Activated B cell treated with CpG ODN at 0.5 μM for 24 hours (primary cell): ENCODE measurements at regions of chr11 and their contacts with region 1.

Region 1: DNA sequence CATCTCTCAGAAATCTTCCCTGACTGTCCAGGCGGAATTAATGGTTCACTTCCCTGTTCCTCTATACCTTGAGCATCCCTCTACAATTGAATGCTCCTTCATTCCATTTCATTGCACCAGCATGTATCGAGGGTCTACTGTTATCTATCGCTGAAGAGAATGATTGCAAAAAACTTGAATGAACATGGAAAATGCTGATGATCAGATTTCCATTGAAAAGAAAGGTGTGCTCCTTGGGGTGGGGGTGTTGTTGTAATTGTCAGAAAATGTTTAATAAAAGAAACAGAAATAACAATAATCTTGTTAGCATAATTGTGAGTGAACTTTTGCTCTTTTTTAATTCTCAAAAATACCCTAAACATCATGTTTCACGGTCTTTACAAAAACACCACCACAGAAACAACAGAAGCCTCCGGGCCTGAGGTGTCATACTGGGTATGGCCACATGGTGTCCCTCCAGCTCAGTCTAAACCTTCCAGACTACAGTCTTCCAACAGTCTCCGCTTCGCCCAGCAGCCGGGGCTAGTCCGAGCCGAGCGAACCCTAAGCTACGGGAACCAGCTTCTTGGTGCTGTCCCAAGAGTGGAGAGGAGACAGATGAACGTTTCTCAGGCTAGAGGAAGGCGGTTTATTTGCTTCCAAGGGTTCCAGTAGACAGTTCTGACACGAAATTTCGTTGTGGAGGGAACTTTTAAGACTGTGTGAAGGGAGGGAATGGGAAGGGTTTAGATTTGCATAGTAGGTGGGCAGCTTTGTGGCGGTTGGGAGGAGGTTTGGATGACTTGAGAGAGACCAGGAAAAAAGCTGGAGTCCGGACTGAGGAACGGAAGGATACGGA is 75.8 kb upstream of the ZBED5 start:
- DNase-seq: peak; percentile 74
- ATAC-seq: peak; percentile 96
- H3K4me3 Mint-ChIP-seq: peak overlapping the region; percentile 82
- H3K27ac Mint-ChIP-seq: peak overlapping the region; percentile 18
- H3K4me1 Mint-ChIP-seq: peaks cover 22% of the 10 kb centered on the region
- H3K27me3 Mint-ChIP-seq: peaks cover 28% of the 10 kb centered on the region
- CTCF ChIP-seq: peak; percentile 72

Region 2: GRCh38 chr11:10564696-10565318 is 368.9 kb before region 1 on chr11:
- CTCF ChIA-PET with region 1: no interaction called
- POLR2A ChIA-PET with region 1: no interaction called
- intact Hi-C with region 1: no loop called
- DNase-seq: no peak
- ATAC-seq: peak; percentile 31
- H3K4me3 Mint-ChIP-seq: no peak overlapping the region
- H3K27ac Mint-ChIP-seq: peak overlapping the region; percentile 38
- H3K4me1 Mint-ChIP-seq: peaks cover 44% of the 10 kb centered on the region
- H3K27me3 Mint-ChIP-seq: no peaks in the 10 kb centered on the region
- CTCF ChIP-seq: no peak

Region 3: GRCh38 chr11:10575346-10576034 is 358.2 kb before region 1 on chr11:
- CTCF ChIA-PET with region 1: no interaction called
- POLR2A ChIA-PET with region 1: no interaction called
- intact Hi-C with region 1: no loop called
- DNase-seq: no peak
- ATAC-seq: no peak
- H3K4me3 Mint-ChIP-seq: no peak overlapping the region
- H3K27ac Mint-ChIP-seq: no peak overlapping the region
- H3K4me1 Mint-ChIP-seq: peaks cover 74% of the 10 kb centered on the region
- H3K27me3 Mint-ChIP-seq: no peaks in the 10 kb centered on the region
- CTCF ChIP-seq: no peak

Region 4: DNA sequence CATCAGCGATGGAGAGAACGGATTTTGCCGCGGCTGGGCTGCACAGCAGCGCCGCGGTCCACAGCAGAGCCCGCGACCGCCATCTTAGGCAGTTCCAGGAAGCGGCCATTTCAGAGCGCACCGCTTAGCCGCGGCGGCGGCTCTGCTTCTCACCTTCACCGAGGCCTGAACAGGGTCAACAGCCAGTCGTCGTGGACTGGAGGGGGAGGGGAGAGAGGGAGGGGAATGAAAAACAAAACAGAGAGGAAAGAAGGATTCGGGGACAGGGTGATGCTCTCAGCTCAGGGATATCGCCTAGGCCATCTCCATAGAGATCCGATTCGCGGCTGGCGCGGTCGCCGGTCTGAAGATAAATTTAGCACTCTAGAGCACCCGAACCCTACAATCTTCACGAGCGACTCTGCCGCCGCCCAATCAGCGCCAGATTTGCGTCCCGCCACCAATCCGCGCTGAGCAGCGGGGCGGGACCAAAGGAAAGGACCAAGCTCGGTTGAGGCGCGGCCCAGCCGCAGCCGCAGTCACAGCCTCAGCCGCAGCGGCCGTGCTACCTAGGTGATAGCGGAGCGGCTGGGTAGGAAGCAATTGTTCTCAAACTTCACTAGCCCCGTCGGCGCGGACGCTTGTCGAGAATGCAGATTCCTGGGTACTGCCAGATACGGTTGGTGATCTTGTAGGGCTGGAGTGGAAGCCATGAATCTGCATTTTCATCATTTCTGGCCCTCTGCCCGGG is 75.8 kb before region 1 on chr11 and contains the start of gene ZBED5:
- CTCF ChIA-PET with region 1: no interaction called
- POLR2A ChIA-PET with region 1: interaction called, 10 read pairs
- intact Hi-C with region 1: loop called (anchors 2 kb)
- DNase-seq: peak; percentile 93
- ATAC-seq: peak; percentile 89
- H3K4me3 Mint-ChIP-seq: peak within 1 kb of the TSS; percentile 100
- H3K27ac Mint-ChIP-seq: peak within 1 kb of the TSS; percentile 100
- H3K4me1 Mint-ChIP-seq: peaks cover 48% of the 10 kb centered on the region
- H3K27me3 Mint-ChIP-seq: no peaks in the 10 kb centered on the region
- CTCF ChIP-seq: no peak
- total RNA-seq, gene ZBED5: 111 and 116 TPM in 2 replicates

Region 5: DNA sequence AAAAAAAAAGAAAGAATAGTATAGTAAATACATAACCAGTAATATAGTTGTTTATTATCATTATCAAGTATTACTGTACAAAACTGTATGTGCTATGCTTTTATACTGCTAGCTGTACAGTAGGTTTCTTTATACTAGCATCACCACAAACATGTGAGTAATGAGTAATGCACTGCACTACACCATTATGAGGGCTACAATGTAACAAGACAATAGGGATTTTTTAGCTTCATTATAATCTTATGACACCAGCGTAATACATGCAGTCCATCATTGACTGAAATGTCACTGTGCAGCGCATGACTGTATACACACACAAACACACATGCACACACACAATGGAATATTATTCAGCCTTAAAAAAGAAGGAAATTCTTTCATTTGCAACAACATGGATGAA is 35.7 kb after region 1 on chr11:
- CTCF ChIA-PET with region 1: no interaction called
- POLR2A ChIA-PET with region 1: no interaction called
- intact Hi-C with region 1: no loop called
- DNase-seq: no peak
- ATAC-seq: no peak
- H3K4me3 Mint-ChIP-seq: no peak overlapping the region
- H3K27ac Mint-ChIP-seq: no peak overlapping the region
- H3K4me1 Mint-ChIP-seq: peaks cover 8% of the 10 kb centered on the region
- H3K27me3 Mint-ChIP-seq: peaks cover 4% of the 10 kb centered on the region
- CTCF ChIP-seq: no peak

Region 6: GRCh38 chr11:10979529-10979928 is 45.9 kb after region 1 on chr11:
- CTCF ChIA-PET with region 1: interaction called, 11 read pairs
- POLR2A ChIA-PET with region 1: no interaction called
- intact Hi-C with region 1: no loop called
- DNase-seq: no peak
- ATAC-seq: peak; percentile 71
- H3K4me3 Mint-ChIP-seq: peak overlapping the region; percentile 55
- H3K27ac Mint-ChIP-seq: peak overlapping the region; percentile 68
- H3K4me1 Mint-ChIP-seq: peaks cover 68% of the 10 kb centered on the region
- H3K27me3 Mint-ChIP-seq: no peaks in the 10 kb centered on the region
- CTCF ChIP-seq: no peak

Region 7: GRCh38 chr11:11016068-11016467 is 82.4 kb after region 1 on chr11:
- CTCF ChIA-PET with region 1: interaction called, 97 read pairs
- POLR2A ChIA-PET with region 1: interaction called, 3 read pairs
- intact Hi-C with region 1: no loop called
- DNase-seq: no peak
- ATAC-seq: no peak
- H3K4me3 Mint-ChIP-seq: no peak overlapping the region
- H3K27ac Mint-ChIP-seq: no peak overlapping the region
- H3K4me1 Mint-ChIP-seq: peaks cover 16% of the 10 kb centered on the region
- H3K27me3 Mint-ChIP-seq: no peaks in the 10 kb centered on the region
- CTCF ChIP-seq: no peak

Region 8: DNA sequence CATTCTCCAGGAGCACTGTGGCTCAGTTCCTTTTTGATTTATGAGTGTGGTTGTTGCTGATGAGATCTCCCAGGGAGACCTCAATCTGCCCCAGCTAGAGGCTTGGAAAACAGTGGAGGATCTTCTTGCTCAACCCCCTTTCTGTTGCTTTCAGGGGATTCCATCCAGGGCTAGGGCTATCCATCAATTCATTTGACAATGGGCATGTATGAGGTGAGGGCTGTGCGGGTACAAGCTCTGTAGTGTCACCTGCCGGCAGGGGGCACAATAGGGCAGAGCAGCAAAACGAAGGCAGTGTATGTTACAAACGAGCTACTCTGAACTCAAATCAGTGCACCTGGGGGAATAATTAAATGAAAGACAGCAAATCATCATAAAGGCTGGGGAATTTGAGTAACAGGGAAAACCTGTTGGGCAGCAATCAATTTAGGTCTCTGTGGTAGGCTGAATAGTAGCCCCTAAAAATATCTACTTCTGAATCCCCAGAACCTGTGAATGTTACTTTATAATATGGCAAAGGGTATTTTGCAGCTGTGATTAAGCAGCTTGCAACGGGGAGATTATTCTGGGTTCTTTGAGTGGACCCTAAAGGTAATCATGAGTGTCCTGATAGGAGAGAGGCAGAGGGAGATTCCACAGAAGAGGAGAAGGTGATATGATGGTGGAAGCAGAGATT is 94.5 kb after region 1 on chr11:
- CTCF ChIA-PET with region 1: interaction called, 70 read pairs
- POLR2A ChIA-PET with region 1: interaction called, 5 read pairs
- intact Hi-C with region 1: no loop called
- DNase-seq: peak; percentile 55
- ATAC-seq: peak; percentile 73
- H3K4me3 Mint-ChIP-seq: no peak overlapping the region
- H3K27ac Mint-ChIP-seq: no peak overlapping the region
- H3K4me1 Mint-ChIP-seq: no peaks in the 10 kb centered on the region
- H3K27me3 Mint-ChIP-seq: peaks cover 7% of the 10 kb centered on the region
- CTCF ChIP-seq: no peak

Region 9: DNA sequence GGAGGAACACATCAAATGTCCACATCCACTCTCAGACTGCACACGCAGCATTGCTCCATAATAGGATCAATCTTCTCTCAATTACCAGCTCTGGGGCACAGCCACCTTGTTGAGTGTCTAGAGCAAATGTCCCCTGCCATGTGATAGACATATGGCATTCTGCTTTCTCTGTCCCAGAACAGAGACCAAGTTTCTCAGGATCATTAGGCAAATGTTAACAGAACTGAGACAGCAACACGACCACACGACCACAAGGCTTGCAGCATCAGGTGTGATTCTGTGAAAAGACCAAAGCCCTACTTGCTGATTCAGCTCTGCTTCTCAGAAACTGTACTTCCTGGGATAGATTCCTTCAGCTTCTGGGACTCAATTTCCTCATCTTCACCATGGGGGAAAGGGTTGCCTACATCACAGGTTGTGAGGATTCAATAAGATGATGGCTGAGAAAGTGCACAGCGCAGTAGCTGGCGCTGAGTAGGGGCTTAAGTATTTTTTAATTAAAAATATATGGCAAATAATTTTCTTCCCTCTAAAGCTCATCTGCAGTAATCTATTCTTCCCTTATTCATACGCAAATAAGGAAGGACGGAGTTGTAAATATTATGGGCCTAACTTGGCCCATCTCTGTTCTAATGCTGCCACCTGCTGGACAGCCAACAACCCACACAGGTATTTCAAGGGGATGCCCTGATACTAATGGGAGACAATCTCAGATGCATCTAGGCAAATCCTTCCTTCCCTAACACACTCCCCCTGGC is 853.8 kb after region 1 on chr11:
- CTCF ChIA-PET with region 1: interaction called, 17 read pairs
- POLR2A ChIA-PET with region 1: no interaction called
- intact Hi-C with region 1: loop called (anchors 1 kb)
- DNase-seq: peak; percentile 33
- ATAC-seq: peak; percentile 85
- H3K4me3 Mint-ChIP-seq: no peak overlapping the region
- H3K27ac Mint-ChIP-seq: no peak overlapping the region
- H3K4me1 Mint-ChIP-seq: no peaks in the 10 kb centered on the region
- H3K27me3 Mint-ChIP-seq: peaks cover 9% of the 10 kb centered on the region
- CTCF ChIP-seq: peak; percentile 81